ENCODE measurements at regions of chr14 and their contacts with region 1.

Region 1: DNA sequence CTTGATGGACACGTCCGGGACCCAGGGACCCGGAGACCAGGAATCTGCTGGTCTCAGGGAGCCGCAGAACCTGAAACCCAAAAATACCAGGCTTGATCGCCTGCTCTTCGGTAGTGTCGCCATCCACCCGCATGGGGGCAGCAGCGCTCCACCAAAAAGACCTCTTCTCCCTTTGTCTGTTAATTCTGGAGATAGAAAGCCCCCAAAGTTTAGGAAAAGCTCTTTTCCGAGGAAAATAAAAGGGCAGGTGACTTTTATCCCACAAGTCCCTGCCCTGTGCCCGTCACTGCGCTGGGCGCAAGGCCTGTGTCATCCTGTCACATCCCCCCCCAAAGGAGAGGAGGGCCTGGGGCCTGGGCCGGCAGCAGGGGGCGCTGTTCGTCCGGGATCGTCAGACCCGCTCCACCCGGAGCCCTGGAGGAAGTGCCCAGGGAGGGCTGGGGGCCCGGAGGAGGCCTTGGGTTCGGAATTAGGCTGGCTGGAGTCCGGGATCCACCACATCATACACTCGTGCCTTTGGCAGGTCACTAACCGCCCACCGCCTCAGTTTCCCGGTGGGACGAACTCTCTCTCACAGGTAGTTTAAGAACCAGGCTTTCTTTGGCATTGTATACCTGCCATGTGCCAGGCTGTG is 31.9 kb downstream of the DAD1 start:
- DNase-seq: peak; percentile 86 to 90
- H3K4me3 ChIP-seq: peak overlapping the region; percentile 21
- H3K4me3 Mint-ChIP-seq: peak overlapping the region; percentile 47
- H3K27ac Mint-ChIP-seq: peak overlapping the region; percentile 95
- H3K4me1 ChIP-seq: peaks cover 53% of the 10 kb centered on the region
- H3K4me1 Mint-ChIP-seq: peaks cover 42% of the 10 kb centered on the region
- H3K27me3 ChIP-seq: no peaks in the 10 kb centered on the region
- H3K27me3 Mint-ChIP-seq: no peaks in the 10 kb centered on the region
- CTCF ChIP-seq: peak; percentile 86 to 99

Region 2: GRCh38 chr14:22314181-22314820 is 242.8 kb before region 1 on chr14:
- CTCF ChIA-PET with region 1: no interaction called
- POLR2A ChIA-PET with region 1: no interaction called
- intact Hi-C with region 1: loop called (anchors 10 kb)
- DNase-seq: peak in 1 of 2 experiments; percentile 66
- H3K4me3 ChIP-seq: no peak overlapping the region
- H3K4me3 Mint-ChIP-seq: no peak overlapping the region
- H3K27ac Mint-ChIP-seq: peak overlapping the region; percentile 37
- H3K4me1 ChIP-seq: peaks cover 6% of the 10 kb centered on the region; the same call in 1 of the 2 replicates
- H3K4me1 Mint-ChIP-seq: peaks cover 19% of the 10 kb centered on the region
- H3K27me3 ChIP-seq: no peaks in the 10 kb centered on the region
- H3K27me3 Mint-ChIP-seq: no peaks in the 10 kb centered on the region
- CTCF ChIP-seq: peak; percentile 64 to 65

Region 3: GRCh38 chr14:22644305-22644635 is 87.2 kb after region 1 on chr14 and contains the start of gene OR6J1:
- CTCF ChIA-PET with region 1: interaction called, 3 read pairs
- POLR2A ChIA-PET with region 1: no interaction called
- intact Hi-C with region 1: loop called (anchors 1 kb)
- DNase-seq: no peak
- H3K4me3 ChIP-seq: no peak within 1 kb of the TSS
- H3K4me3 Mint-ChIP-seq: peak within 1 kb of the TSS; percentile 12
- H3K27ac Mint-ChIP-seq: peak within 1 kb of the TSS; percentile 48
- H3K4me1 ChIP-seq: peaks cover 14% of the 10 kb centered on the region
- H3K4me1 Mint-ChIP-seq: peaks cover 17% of the 10 kb centered on the region
- H3K27me3 ChIP-seq: no peaks in the 10 kb centered on the region
- H3K27me3 Mint-ChIP-seq: no peaks in the 10 kb centered on the region
- CTCF ChIP-seq: no peak
- total RNA-seq, gene OR6J1: 0.16 and 0.18 TPM in 2 replicates

Region 4: GRCh38 chr14:22852940-22853767 is 296.0 kb after region 1 on chr14:
- CTCF ChIA-PET with region 1: interaction called, 3 read pairs
- POLR2A ChIA-PET with region 1: no interaction called
- intact Hi-C with region 1: loop called (anchors 1 kb)
- DNase-seq: peak; percentile 89 to 92
- H3K4me3 ChIP-seq: peak overlapping the region; percentile 35
- H3K4me3 Mint-ChIP-seq: peak overlapping the region; percentile 69
- H3K27ac Mint-ChIP-seq: peak overlapping the region; percentile 68
- H3K4me1 ChIP-seq: peaks cover 25% of the 10 kb centered on the region
- H3K4me1 Mint-ChIP-seq: peaks cover 7% of the 10 kb centered on the region
- H3K27me3 ChIP-seq: no peaks in the 10 kb centered on the region
- H3K27me3 Mint-ChIP-seq: no peaks in the 10 kb centered on the region
- CTCF ChIP-seq: peak; percentile 87 to 91

Region 5: DNA sequence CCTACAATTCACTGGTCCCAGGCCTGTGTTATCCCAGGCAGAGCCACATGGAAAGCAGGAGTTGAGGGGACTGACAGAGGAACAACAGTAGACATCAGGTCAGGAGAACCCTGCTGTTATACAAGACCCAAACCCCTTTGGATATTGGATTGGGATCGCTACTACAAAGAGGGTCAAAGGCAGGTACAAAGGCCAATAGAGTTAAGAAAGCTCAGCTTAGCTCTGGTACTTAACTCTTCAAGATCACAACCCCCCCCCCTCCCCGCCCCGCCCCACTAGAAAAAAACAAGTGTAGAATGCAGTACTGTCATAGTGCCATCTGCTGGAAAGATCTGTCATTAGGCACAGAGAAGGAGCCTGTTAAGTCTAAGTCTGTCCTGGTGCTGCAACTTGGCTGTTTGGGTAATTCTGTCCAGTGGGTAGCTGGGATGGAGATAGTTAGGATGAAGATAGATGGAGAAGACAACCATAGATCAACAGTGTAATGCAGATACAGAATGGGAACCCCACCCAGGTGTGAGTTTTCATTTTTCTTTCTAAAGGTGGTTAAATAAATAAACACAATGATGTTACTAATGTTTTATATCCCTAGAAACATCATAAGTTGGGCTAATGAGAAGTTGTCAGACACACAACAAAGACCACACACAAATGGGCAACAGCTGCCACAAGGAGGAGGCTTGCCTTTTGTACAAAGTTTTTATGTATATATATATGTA is 343.1 kb after region 1 on chr14:
- CTCF ChIA-PET with region 1: no interaction called
- POLR2A ChIA-PET with region 1: no interaction called
- intact Hi-C with region 1: loop called (anchors 1 kb)
- DNase-seq: peak; percentile 57 to 64
- H3K4me3 ChIP-seq: no peak overlapping the region
- H3K4me3 Mint-ChIP-seq: no peak overlapping the region
- H3K27ac Mint-ChIP-seq: no peak overlapping the region
- H3K4me1 ChIP-seq: 0 out of 2 replicates have a peak, but pooled peaks cover 7% of the 10 kb centered on the region
- H3K4me1 Mint-ChIP-seq: no peaks in the 10 kb centered on the region
- H3K27me3 ChIP-seq: no peaks in the 10 kb centered on the region
- H3K27me3 Mint-ChIP-seq: no peaks in the 10 kb centered on the region
- CTCF ChIP-seq: peak; percentile 46 to 70

Region 6: GRCh38 chr14:23057757-23058653 is 500.9 kb after region 1 on chr14:
- CTCF ChIA-PET with region 1: no interaction called
- POLR2A ChIA-PET with region 1: no interaction called
- intact Hi-C with region 1: loop called (anchors 5 kb)
- DNase-seq: peak; percentile 91 to 94
- H3K4me3 ChIP-seq: peak overlapping the region; percentile 56
- H3K4me3 Mint-ChIP-seq: peak overlapping the region; percentile 85
- H3K27ac Mint-ChIP-seq: peak overlapping the region; percentile 68
- H3K4me1 ChIP-seq: peaks cover 18% of the 10 kb centered on the region
- H3K4me1 Mint-ChIP-seq: peaks cover 23% of the 10 kb centered on the region
- H3K27me3 ChIP-seq: no peaks in the 10 kb centered on the region
- H3K27me3 Mint-ChIP-seq: no peaks in the 10 kb centered on the region
- CTCF ChIP-seq: peak; percentile 93 to 96

Measured in Caco-2 (cell line).